Activated CD4-positive, alpha-beta T cell treated with anti-CD3 and anti-CD28 coated beads for 36 hours (primary cell): ENCODE measurements at regions of chr6 and their contacts with region 1.

Region 1: DNA sequence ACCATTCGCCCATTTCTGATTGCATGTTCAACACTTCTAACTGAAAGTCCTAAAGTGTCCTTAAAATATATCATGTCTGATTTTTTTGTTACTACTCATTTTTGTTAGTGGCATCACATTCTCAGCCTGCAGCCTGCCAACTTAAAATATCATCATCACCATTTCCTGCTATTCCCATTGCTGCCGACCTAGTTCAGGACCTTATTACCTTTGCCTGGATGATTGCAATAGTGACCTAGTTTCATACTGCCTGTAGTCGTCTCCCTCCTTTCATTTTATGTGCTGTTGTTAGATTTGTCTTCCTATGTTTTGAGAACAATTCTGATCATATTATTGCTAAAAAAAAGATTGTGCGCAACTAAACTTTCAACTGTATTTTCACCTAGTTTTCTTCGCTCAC is 6.2 kb downstream of the RWDD1 start:
- DNase-seq: no peak
- ATAC-seq: no peak
- H3K4me3 Mint-ChIP-seq: no peak overlapping the region
- H3K27ac Mint-ChIP-seq: no peak overlapping the region
- H3K4me1 Mint-ChIP-seq: peaks cover 48% of the 10 kb centered on the region
- H3K27me3 Mint-ChIP-seq: no peaks in the 10 kb centered on the region

Region 2: GRCh38 chr6:116511404-116512110 is 65.9 kb before region 1 on chr6 and contains the start of gene CALHM5:
- CTCF ChIA-PET with region 1: no interaction called
- POLR2A ChIA-PET with region 1: no interaction called
- intact Hi-C with region 1: no loop called
- DNase-seq: no peak
- ATAC-seq: no peak
- H3K4me3 Mint-ChIP-seq: no peak within 1 kb of the TSS
- H3K27ac Mint-ChIP-seq: no peak within 1 kb of the TSS
- H3K4me1 Mint-ChIP-seq: no peaks in the 10 kb centered on the region
- H3K27me3 Mint-ChIP-seq: no peaks in the 10 kb centered on the region
- total RNA-seq, gene CALHM5: not detected

Region 3: GRCh38 chr6:116667623-116668022 is 90.1 kb after region 1 on chr6:
- CTCF ChIA-PET with region 1: interaction called, 3 read pairs
- POLR2A ChIA-PET with region 1: no interaction called
- intact Hi-C with region 1: loop called (anchors 1 to 5 kb)
- DNase-seq: no peak
- ATAC-seq: no peak
- H3K4me3 Mint-ChIP-seq: peak overlapping the region; percentile 89
- H3K27ac Mint-ChIP-seq: peak overlapping the region; percentile 96
- H3K4me1 Mint-ChIP-seq: peaks cover 38% of the 10 kb centered on the region
- H3K27me3 Mint-ChIP-seq: no peaks in the 10 kb centered on the region